K562 (cell line): ENCODE measurements at regions of chr7 and their contacts with region 1.

Region 1: GRCh38 chr7:77657427-77658224 is 38.6 kb upstream of the RSBN1L start:
- DNase-seq: peak; percentile 40 to 68 (median 46)
- ATAC-seq: peak; percentile 94
- H3K4me3 ChIP-seq: no peak overlapping the region
- H3K27ac ChIP-seq: no peak overlapping the region
- H3K4me1 ChIP-seq: no peaks in the 10 kb centered on the region
- H3K27me3 ChIP-seq: no peaks in the 10 kb centered on the region
- CTCF ChIP-seq: peak; percentile 62 to 86 (median 66); a peak in 5 of 6 replicates
- EP300 ChIP-seq: no peak
- POLR2A ChIP-seq: no peak
- RAD21 ChIP-seq: peak; percentile 94 to 95

Region 2: GRCh38 chr7:77561352-77561751 is 96.3 kb before region 1 on chr7:
- CTCF ChIA-PET with region 1: no interaction called
- POLR2A ChIA-PET with region 1: no interaction called
- in situ Hi-C with region 1: no loop called
- intact Hi-C with region 1: no loop called
- DNase-seq: no peak
- ATAC-seq: 0 out of 3 replicates have a peak, but pooled peaks have one; percentile 12
- H3K4me3 ChIP-seq: no peak overlapping the region
- H3K27ac ChIP-seq: no peak overlapping the region; the same call in 2 of the 3 replicates
- H3K4me1 ChIP-seq: peaks cover 3 to 16% of the 10 kb centered on the region in 2 experiments; a peak in 2 of 5 replicates
- H3K27me3 ChIP-seq: no peaks in the 10 kb centered on the region
- CTCF ChIP-seq: no peak
- EP300 ChIP-seq: no peak
- POLR2A ChIP-seq: no peak
- RAD21 ChIP-seq: no peak

Region 3: GRCh38 chr7:77752021-77752420 is 94.4 kb after region 1 on chr7:
- CTCF ChIA-PET with region 1: no interaction called
- POLR2A ChIA-PET with region 1: no interaction called
- in situ Hi-C with region 1: loop called (anchors 5 kb)
- intact Hi-C with region 1: no loop called
- DNase-seq: peak in 2 of 4 experiments; percentile 34 to 50
- ATAC-seq: peak; percentile 84
- H3K4me3 ChIP-seq: no peak overlapping the region
- H3K27ac ChIP-seq: peak overlapping the region; percentile 1; the same call in 1 of the 3 replicates
- H3K4me1 ChIP-seq: peaks cover 3 to 15% of the 10 kb centered on the region in 2 experiments; a peak in 4 of 5 replicates
- H3K27me3 ChIP-seq: no peaks in the 10 kb centered on the region
- CTCF ChIP-seq: no peak
- EP300 ChIP-seq: no peak; the same call in 1 of the 2 replicates
- POLR2A ChIP-seq: no peak
- RAD21 ChIP-seq: no peak

Region 4: DNA sequence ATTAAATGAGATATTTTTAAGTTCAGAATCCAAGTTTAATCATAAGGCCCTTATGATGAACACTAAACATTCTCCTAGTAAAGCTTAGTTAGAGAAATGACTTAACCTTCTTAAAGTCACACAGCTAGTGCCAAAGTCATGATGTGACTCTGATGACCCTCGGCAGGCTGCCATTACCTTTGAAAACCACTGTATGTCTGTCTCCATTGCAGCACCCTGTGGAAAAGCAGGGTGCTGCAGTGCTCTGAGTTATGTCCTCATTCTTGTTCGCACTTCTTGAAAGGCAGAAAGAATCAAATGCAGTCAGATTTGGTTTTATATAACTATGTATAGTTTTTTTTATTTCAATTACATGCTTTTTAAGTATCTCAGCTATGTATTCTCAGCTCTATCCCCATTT is 246.0 kb after region 1 on chr7:
- CTCF ChIA-PET with region 1: no interaction called
- POLR2A ChIA-PET with region 1: no interaction called
- in situ Hi-C with region 1: no loop called
- intact Hi-C with region 1: loop called (anchors 1 kb)
- DNase-seq: peak in 2 of 4 experiments; percentile 62 to 73
- ATAC-seq: peak; percentile 88
- H3K4me3 ChIP-seq: no peak overlapping the region
- H3K27ac ChIP-seq: no peak overlapping the region
- H3K4me1 ChIP-seq: peaks cover 5 to 16% of the 10 kb centered on the region in 2 experiments; a peak in 3 of 5 replicates
- H3K27me3 ChIP-seq: no peaks in the 10 kb centered on the region
- CTCF ChIP-seq: peak; percentile 56 to 73 (median 68)
- EP300 ChIP-seq: no peak
- POLR2A ChIP-seq: no peak
- RAD21 ChIP-seq: peak; percentile 42 to 72

Region 5: GRCh38 chr7:78039790-78040776 is 382.5 kb after region 1 on chr7:
- CTCF ChIA-PET with region 1: interaction called, 3 read pairs
- POLR2A ChIA-PET with region 1: no interaction called
- in situ Hi-C with region 1: loop called (anchors 10 kb)
- intact Hi-C with region 1: loop called (anchors 1 kb)
- DNase-seq: peak; percentile 76 to 85 (median 81)
- ATAC-seq: peak; percentile 99
- H3K4me3 ChIP-seq: no peak overlapping the region
- H3K27ac ChIP-seq: no peak overlapping the region
- H3K4me1 ChIP-seq: peaks cover 0 to 6% of the 10 kb centered on the region in 2 experiments; a peak in 1 of 5 replicates
- H3K27me3 ChIP-seq: peaks cover 19 to 27% of the 10 kb centered on the region in 2 experiments
- CTCF ChIP-seq: peak; percentile 85 to 92 (median 88)
- EP300 ChIP-seq: no peak
- POLR2A ChIP-seq: no peak
- RAD21 ChIP-seq: peak; percentile 88 to 93

Region 6: GRCh38 chr7:78226059-78226719 is 568.6 kb after region 1 on chr7:
- CTCF ChIA-PET with region 1: interaction called, 3 read pairs
- POLR2A ChIA-PET with region 1: no interaction called
- in situ Hi-C with region 1: loop called (anchors 25 kb)
- intact Hi-C with region 1: loop called (anchors 10 kb)
- DNase-seq: peak; percentile 48 to 68 (median 64)
- ATAC-seq: peak; percentile 91
- H3K4me3 ChIP-seq: no peak overlapping the region
- H3K27ac ChIP-seq: no peak overlapping the region
- H3K4me1 ChIP-seq: no peaks in the 10 kb centered on the region
- H3K27me3 ChIP-seq: no peaks in the 10 kb centered on the region
- CTCF ChIP-seq: peak; percentile 55 to 66 (median 55)
- EP300 ChIP-seq: no peak
- POLR2A ChIP-seq: no peak
- RAD21 ChIP-seq: peak; percentile 54 to 55; a peak in 3 of 4 replicates